ENCODE measurements at regions of chr17 and their contacts with region 1.

Region 1: DNA sequence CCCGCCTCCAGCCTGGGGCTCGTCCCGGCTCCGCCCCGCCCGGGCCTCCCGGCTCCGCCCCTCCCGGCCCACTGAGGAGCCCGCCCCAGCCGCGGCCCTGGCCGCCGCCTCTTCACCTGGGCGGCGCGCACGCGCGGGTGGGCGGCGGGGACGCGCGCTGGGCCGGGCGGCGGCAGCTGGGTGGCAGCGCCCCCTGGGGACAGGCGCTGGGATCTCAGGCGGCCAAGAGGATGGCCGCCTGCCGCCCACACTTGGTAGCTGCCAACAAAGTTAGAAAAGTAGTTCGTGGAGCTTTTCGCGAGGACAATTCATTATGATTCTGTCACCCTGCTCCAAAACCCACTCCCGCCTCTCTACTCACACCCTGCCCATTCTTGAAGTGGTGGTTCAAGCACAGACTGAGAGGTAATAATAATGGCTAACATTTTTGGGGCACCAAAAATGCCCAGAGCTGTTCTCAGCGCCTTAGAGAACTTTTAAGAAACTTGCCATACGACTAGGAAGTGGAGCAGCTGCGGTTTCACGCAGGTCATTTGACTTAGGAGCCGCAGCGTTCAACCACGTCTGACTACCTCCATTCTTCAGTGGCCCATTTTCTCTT is 340 bp upstream of the MYO1D start:
- DNase-seq: peak; percentile 23
- H3K4me3 ChIP-seq: peak overlapping the region; percentile 64
- H3K27ac ChIP-seq: no peak overlapping the region
- H3K27me3 ChIP-seq: peaks cover 9% of the 10 kb centered on the region
- CTCF ChIP-seq: peak; percentile 81

Region 2: DNA sequence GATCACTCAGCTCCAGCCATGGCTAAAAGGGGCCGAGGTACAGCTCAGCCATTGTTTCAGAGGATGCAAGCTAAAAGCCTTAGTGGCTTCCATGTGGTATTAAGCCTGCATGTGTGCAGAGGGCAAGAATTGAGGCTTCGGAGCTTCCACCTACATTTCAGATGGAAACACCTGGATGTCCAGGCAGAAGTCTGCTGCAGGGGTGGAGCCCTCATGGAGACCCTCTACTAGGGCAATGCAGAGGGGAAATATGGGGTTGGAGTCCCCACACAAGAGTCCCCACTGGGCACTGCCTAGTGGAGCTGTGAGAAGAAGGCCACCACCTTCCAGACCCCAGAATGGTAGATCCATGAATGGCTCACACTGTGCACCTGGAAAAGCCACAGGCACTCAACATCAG is 447.7 kb before region 1 on chr17:
- CTCF ChIA-PET with region 1: no interaction called
- POLR2A ChIA-PET with region 1: no interaction called
- DNase-seq: no peak
- H3K4me3 ChIP-seq: no peak overlapping the region
- H3K27ac ChIP-seq: no peak overlapping the region
- H3K27me3 ChIP-seq: peaks cover 2% of the 10 kb centered on the region
- CTCF ChIP-seq: no peak

Region 3: GRCh38 chr17:32627239-32627996 is 249.8 kb before region 1 on chr17:
- CTCF ChIA-PET with region 1: no interaction called
- POLR2A ChIA-PET with region 1: no interaction called
- DNase-seq: no peak
- H3K4me3 ChIP-seq: no peak overlapping the region
- H3K27ac ChIP-seq: no peak overlapping the region
- H3K27me3 ChIP-seq: peaks cover 3% of the 10 kb centered on the region
- CTCF ChIP-seq: no peak

Region 4: DNA sequence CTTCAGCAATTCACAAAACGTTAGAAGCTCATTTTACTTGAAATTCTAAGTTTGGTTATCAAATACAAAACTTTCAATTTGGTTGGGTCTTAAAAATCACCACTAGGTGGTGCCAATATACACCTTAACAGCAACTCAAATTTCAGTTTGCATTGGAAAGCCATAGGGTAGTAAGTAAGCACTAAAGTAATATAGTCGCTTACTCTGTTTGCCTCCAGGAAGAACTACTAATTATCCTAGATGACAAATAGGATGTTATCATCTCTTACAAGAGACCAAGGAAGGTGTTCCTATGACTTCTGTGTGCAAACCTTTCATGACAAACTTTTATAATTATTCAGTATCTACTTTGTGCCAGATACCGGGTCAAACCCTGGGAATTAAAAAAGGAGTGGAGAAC is 93.7 kb before region 1 on chr17:
- CTCF ChIA-PET with region 1: interaction called, 72 read pairs
- POLR2A ChIA-PET with region 1: no interaction called
- DNase-seq: peak; percentile 27
- H3K4me3 ChIP-seq: no peak overlapping the region
- H3K27ac ChIP-seq: no peak overlapping the region
- H3K27me3 ChIP-seq: no peaks in the 10 kb centered on the region
- CTCF ChIP-seq: peak; percentile 70

Region 5: GRCh38 chr17:32894245-32894644 is 17.0 kb after region 1 on chr17:
- CTCF ChIA-PET with region 1: interaction called, 12 read pairs
- POLR2A ChIA-PET with region 1: no interaction called
- DNase-seq: no peak
- H3K4me3 ChIP-seq: no peak overlapping the region
- H3K27ac ChIP-seq: no peak overlapping the region
- H3K27me3 ChIP-seq: no peaks in the 10 kb centered on the region
- CTCF ChIP-seq: no peak

Region 6: GRCh38 chr17:32909787-32910369 is 32.6 kb after region 1 on chr17:
- CTCF ChIA-PET with region 1: interaction called, 46 read pairs
- POLR2A ChIA-PET with region 1: no interaction called
- DNase-seq: peak; percentile 66
- H3K4me3 ChIP-seq: no peak overlapping the region
- H3K27ac ChIP-seq: no peak overlapping the region
- H3K27me3 ChIP-seq: peaks cover 1% of the 10 kb centered on the region
- CTCF ChIP-seq: peak; percentile 84

Region 7: DNA sequence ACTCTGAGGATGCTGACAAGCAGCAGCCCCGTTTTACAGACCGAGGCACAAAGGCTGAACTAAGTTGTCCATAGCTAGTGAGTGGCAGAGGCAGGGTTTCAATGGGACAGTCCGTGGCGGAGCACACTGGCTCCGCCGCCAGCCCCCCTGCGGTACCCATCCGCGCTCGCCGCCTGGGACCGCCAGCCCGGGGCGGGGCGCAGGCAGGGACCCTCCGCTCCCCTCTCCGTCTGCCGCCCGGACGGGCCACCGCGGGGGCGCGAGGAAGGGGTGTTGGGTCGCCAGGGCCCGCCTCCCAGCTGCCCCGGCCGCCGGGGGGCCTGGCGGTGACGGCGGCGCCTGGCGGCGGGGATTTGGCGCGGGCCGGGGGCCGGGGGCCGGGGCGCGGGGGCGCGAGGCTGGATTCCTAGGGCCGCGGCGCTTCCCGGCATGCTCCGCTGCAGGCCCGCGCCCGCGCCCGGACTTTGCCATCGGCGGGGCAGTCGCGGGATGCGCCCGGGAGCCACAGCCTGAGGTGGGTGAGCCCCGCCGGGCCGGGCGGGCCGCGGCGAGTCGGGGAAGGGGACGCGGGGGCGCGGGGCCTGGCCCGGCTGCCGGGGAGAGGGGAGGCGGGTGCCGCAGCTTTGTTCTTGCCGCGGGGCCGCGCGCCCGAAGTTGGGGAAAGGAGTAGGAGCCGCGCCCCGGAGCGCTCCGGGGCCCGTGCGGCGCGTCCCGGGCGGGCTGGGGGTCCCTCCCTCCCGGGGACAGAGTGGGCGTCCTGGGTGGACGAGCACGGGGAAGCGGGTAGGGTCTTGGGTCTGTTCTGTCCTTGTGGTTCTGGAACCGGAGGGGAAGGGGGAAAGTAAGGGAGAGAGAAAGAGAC is 50.7 kb after region 1 on chr17 and contains the start of gene TMEM98:
- CTCF ChIA-PET with region 1: interaction called, 20 read pairs
- POLR2A ChIA-PET with region 1: interaction called, 6 read pairs
- DNase-seq: no peak
- H3K4me3 ChIP-seq: peak within 1 kb of the TSS; percentile 68
- H3K27ac ChIP-seq: peak within 1 kb of the TSS; percentile 33
- H3K27me3 ChIP-seq: no peaks in the 10 kb centered on the region
- CTCF ChIP-seq: no peak
- polyA plus RNA-seq, gene TMEM98: 260 and 304 TPM in 2 replicates

Region 8: DNA sequence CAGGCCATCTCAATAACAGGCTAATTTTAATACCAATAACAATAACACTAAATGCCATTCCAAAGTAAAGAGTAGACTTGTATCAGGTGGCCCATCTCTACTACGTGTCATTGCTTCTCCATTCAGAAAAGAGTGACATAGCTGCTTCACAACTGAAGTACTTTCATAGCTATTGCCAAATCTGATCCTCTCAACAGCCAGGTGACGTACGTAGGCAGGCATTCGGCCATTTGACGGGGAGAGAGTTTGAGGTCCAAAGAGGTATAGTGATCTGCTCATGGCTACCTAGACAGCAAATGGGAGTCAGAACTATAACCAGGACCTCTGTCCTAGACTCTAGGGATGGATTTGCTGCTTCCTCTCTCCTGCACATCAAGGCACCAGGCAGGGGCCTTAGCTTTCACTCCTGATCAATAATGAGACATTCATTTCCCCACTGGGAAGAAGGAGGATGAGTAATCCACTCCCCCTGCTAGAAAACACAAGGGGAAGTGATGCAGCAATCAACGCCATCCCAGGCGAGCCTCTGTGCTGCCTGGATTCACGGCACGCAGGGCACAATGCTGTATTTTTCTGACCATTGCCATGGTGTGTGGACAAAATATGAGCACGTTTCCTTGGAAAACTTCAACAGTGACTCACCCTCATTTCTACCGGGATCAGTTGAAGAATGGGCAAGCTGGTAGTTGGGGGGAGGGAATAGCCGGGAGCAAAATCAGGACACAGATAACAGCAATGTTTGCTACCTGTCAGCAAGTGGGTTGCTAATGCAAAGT is 195.3 kb after region 1 on chr17:
- CTCF ChIA-PET with region 1: no interaction called
- POLR2A ChIA-PET with region 1: no interaction called
- DNase-seq: no peak
- H3K4me3 ChIP-seq: no peak overlapping the region
- H3K27ac ChIP-seq: no peak overlapping the region
- H3K27me3 ChIP-seq: no peaks in the 10 kb centered on the region
- CTCF ChIP-seq: no peak

Measured in AG04450 (cell line).